ENCODE measurements at regions of chr14 and their contacts with region 1.

Region 1: GRCh38 chr14:30621940-30622830 is at the start of gene SCFD1:
- DNase-seq: peak; percentile 90
- H3K4me3 Mint-ChIP-seq: peak within 1 kb of the TSS; percentile 98
- H3K27ac Mint-ChIP-seq: peak within 1 kb of the TSS; percentile 99
- H3K4me1 Mint-ChIP-seq: peaks cover 24% of the 10 kb centered on the region
- H3K27me3 Mint-ChIP-seq: no peaks in the 10 kb centered on the region
- CTCF ChIP-seq: no peak
- total RNA-seq, gene SCFD1: 113 and 126 TPM in 2 replicates

Region 2: DNA sequence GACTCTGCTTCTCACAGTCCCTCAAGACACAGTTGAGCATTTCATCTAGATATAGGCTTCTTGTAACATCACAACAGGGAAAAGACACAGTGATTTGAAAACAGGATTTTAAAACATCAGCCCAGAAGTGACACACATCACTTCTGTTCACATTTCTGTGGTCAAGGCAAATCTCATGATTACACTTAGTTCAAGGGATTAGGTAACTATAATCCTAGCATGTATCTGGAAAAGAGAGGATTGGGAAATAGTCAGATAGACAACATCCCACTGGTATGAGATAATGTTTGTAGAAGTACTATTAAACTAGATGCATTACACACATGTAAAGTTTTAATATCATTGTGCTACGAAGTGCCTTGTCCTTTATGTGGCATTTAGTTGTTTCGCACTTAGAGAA is 442.0 kb before region 1 on chr14:
- CTCF ChIA-PET with region 1: no interaction called
- POLR2A ChIA-PET with region 1: no interaction called
- intact Hi-C with region 1: no loop called
- DNase-seq: no peak
- H3K4me3 Mint-ChIP-seq: no peak overlapping the region
- H3K27ac Mint-ChIP-seq: no peak overlapping the region
- H3K4me1 Mint-ChIP-seq: no peaks in the 10 kb centered on the region
- H3K27me3 Mint-ChIP-seq: no peaks in the 10 kb centered on the region
- CTCF ChIP-seq: no peak

Region 3: GRCh38 chr14:30588873-30589272 is 33.3 kb before region 1 on chr14:
- CTCF ChIA-PET with region 1: interaction called, 3 read pairs
- POLR2A ChIA-PET with region 1: interaction called, 17 read pairs
- intact Hi-C with region 1: no loop called
- DNase-seq: no peak
- H3K4me3 Mint-ChIP-seq: no peak overlapping the region
- H3K27ac Mint-ChIP-seq: peak overlapping the region; percentile 9
- H3K4me1 Mint-ChIP-seq: peaks cover 6% of the 10 kb centered on the region
- H3K27me3 Mint-ChIP-seq: no peaks in the 10 kb centered on the region
- CTCF ChIP-seq: no peak

Region 4: GRCh38 chr14:30603404-30603803 is 18.8 kb before region 1 on chr14:
- CTCF ChIA-PET with region 1: interaction called, 35 read pairs
- POLR2A ChIA-PET with region 1: interaction called, 138 read pairs
- intact Hi-C with region 1: no loop called
- DNase-seq: peak; percentile 49
- H3K4me3 Mint-ChIP-seq: no peak overlapping the region
- H3K27ac Mint-ChIP-seq: no peak overlapping the region
- H3K4me1 Mint-ChIP-seq: peaks cover 5% of the 10 kb centered on the region
- H3K27me3 Mint-ChIP-seq: no peaks in the 10 kb centered on the region
- CTCF ChIP-seq: no peak

Region 5: DNA sequence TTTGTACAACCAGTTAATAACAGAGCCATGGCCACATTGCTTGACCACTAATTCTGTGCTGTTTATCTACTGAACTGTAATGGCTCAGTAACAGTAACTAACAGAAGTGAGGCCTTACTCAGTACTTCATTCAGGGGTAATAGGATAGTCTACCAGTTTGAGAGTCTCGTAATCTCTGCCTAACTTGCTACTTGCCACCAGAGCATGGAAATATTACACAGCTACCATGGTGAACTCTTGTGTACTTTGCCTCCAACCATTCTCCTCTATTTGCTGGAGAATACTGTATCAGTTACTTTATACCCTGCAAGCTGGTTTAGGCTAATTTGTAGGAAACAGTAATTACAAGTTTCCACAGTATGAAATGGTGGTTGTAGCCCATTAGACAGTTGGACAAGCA is 10.5 kb after region 1 on chr14:
- CTCF ChIA-PET with region 1: no interaction called
- POLR2A ChIA-PET with region 1: interaction called, 35 read pairs
- intact Hi-C with region 1: no loop called
- DNase-seq: no peak
- H3K4me3 Mint-ChIP-seq: no peak overlapping the region
- H3K27ac Mint-ChIP-seq: no peak overlapping the region
- H3K4me1 Mint-ChIP-seq: peaks cover 5% of the 10 kb centered on the region
- H3K27me3 Mint-ChIP-seq: no peaks in the 10 kb centered on the region
- CTCF ChIP-seq: no peak

Region 6: GRCh38 chr14:30790870-30791269 is 168.7 kb after region 1 on chr14:
- CTCF ChIA-PET with region 1: no interaction called
- POLR2A ChIA-PET with region 1: no interaction called
- intact Hi-C with region 1: no loop called
- DNase-seq: no peak
- H3K4me3 Mint-ChIP-seq: no peak overlapping the region
- H3K27ac Mint-ChIP-seq: no peak overlapping the region
- H3K4me1 Mint-ChIP-seq: no peaks in the 10 kb centered on the region
- H3K27me3 Mint-ChIP-seq: no peaks in the 10 kb centered on the region
- CTCF ChIP-seq: no peak

Measured in MCF 10A (cell line).